Gastrocnemius medialis (tissue), 4 donors: ENCODE measurements at regions of chr14 and their contacts with region 1.

Region 1: GRCh38 chr14:90903101-90903500 is 86.9 kb upstream of the TTC7B start:
- DNase-seq: peak; percentile 23 to 25
- ATAC-seq: peak; percentile 70 to 86
- H3K4me3 ChIP-seq: no peak overlapping the region
- H3K27ac ChIP-seq: no peak overlapping the region
- H3K4me1 ChIP-seq: no peaks in the 10 kb centered on the region
- H3K27me3 ChIP-seq: no peaks in the 10 kb centered on the region
- CTCF ChIP-seq: peak; percentile 44 to 74 (median 62)
- POLR2A ChIP-seq: no peak

Region 2: GRCh38 chr14:90979515-90980239 is 76.6 kb after region 1 on chr14:
- in situ Hi-C with region 1: no loop called
- intact Hi-C with region 1: no loop called
- DNase-seq: no peak
- ATAC-seq: no peak
- H3K4me3 ChIP-seq: no peak overlapping the region
- H3K27ac ChIP-seq: no peak overlapping the region
- H3K4me1 ChIP-seq: peaks cover 0 to 5% of the 10 kb centered on the region in 2 donors
- H3K27me3 ChIP-seq: no peaks in the 10 kb centered on the region
- CTCF ChIP-seq: no peak
- POLR2A ChIP-seq: no peak

Region 3: GRCh38 chr14:91038438-91038837 is 135.3 kb after region 1 on chr14:
- in situ Hi-C with region 1: no loop called
- intact Hi-C with region 1: loop called (anchors 5 kb)
- DNase-seq: peak in 1 of 2 donors; percentile 33
- ATAC-seq: peak; percentile 87 to 91
- H3K4me3 ChIP-seq: no peak overlapping the region
- H3K27ac ChIP-seq: peak overlapping the region in 2 of 4 donors; percentile 8 to 20
- H3K4me1 ChIP-seq: peaks cover 3 to 5% of the 10 kb centered on the region in 2 donors
- H3K27me3 ChIP-seq: no peaks in the 10 kb centered on the region
- CTCF ChIP-seq: no peak
- POLR2A ChIP-seq: no peak

Region 4: DNA sequence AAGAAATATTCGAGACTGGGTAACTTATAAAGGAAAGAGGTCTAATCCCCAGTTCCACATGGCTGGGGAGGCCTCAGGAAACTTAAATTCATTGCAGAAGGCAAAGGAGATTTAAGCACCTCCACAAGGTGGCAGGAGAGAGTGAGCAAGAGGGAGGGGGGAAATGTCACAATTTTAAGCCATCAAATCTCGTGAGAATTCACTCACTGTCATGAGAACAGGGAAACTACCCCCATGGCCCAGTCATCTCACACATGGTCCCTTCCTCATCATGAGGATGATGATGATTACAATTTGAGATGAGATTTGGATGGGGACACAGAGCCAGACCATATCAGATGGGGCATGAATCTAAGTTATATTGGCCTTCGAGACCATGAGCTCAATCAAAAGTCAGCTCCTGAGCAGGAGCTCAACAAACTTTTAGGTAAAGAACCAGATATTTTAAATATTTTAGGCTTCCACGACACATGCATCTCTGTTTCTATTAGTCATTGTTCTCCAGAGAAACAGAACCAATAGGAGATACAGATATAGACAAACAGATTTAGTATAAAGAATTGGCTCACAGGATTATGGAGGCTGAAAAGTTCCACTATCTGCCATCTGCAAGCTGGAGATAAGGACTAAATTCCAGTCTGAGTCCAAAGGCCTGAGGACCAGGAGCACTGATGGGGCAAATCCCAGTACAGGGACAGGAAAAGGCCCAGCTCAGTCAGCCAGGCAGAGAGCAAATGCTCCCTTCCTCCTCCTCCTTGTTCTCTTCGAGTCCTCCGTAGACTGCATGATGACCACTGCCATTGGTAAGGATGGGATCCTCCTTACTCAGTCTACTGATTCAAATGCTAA is 235.6 kb after region 1 on chr14:
- in situ Hi-C with region 1: no loop called
- intact Hi-C with region 1: loop called (anchors 1 kb)
- DNase-seq: peak in 1 of 2 donors; percentile 55
- ATAC-seq: peak; percentile 67 to 81
- H3K4me3 ChIP-seq: no peak overlapping the region
- H3K27ac ChIP-seq: peak overlapping the region; percentile 42 to 63 (median 50)
- H3K4me1 ChIP-seq: peaks cover 15 to 24% of the 10 kb centered on the region in 2 donors
- H3K27me3 ChIP-seq: no peaks in the 10 kb centered on the region
- CTCF ChIP-seq: peak; percentile 37 to 79 (median 65)
- POLR2A ChIP-seq: no peak

Region 5: DNA sequence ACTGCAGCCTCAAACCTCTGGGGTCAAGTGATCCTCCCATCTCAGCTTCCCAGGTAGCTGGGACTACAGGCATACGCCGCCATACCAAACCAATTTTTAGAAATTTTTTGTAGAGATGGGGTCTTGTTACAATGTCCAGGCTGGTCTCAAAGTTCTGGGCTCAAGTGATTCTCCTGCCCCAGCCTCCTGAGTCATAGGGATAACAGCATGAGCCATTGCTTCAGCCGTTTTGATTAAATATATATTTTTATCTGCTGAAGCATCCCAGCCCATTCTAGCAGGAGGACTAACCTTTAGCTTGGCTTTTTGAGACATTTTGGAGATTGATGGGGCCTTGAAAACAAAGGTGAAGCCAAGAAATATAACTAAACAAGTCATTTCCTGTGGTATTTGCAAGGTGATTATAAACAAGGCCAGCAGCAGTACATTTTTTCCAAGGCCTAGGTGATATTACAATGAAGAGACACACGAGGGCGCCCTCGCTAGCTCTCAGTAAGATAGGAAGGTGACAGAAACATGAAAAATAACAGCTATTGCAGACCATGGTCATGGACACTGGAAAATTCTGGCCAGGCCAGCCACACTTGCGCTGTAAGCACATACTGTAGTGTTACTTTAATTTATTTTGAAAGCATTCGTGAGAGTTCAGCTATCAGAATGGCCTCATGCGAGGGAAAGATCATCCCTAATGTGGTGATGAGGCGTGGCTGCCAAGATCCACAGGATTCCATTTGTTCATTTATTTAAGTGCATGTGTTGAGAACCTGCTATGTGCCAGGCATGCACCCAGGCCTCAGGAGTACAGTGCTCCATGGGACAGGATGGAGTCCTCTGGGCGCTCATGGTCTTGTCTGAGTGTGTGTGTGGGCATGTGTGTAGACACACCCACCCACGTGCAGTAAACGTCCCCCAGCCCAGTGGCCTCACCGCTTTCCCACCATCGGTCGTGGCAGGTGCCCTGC is 274.3 kb after region 1 on chr14:
- in situ Hi-C with region 1: loop called (anchors 5 to 10 kb)
- intact Hi-C with region 1: loop called (anchors 1 kb)
- DNase-seq: no peak
- ATAC-seq: no peak
- H3K4me3 ChIP-seq: no peak overlapping the region
- H3K27ac ChIP-seq: peak overlapping the region in 3 of 4 donors; percentile 5 to 40 (median 27)
- H3K4me1 ChIP-seq: peaks cover 4 to 8% of the 10 kb centered on the region in 2 donors
- H3K27me3 ChIP-seq: no peaks in the 10 kb centered on the region
- CTCF ChIP-seq: peak; percentile 23 to 72 (median 60)
- POLR2A ChIP-seq: no peak

Region 6: DNA sequence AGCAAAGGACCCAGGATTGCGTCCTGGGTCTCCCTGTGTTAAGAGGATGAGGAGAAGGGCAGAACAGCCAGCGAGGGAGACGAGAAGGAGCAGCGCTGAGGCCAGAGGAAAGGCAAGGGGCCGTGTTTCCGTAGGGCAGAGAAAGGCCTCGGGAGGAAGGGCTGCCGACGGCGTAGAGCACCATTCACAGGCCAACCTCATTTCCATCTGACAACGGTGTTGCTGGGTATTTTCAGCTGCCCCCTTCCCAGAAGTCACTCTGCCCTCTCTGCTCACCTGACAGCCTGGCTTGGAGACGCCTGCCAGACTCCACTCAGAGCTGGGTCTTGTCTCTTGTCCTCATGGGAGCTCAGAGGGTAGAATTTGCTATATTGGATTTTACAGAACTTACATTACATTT is 290.0 kb after region 1 on chr14:
- in situ Hi-C with region 1: no loop called
- intact Hi-C with region 1: no loop called
- DNase-seq: no peak
- ATAC-seq: no peak
- H3K4me3 ChIP-seq: no peak overlapping the region
- H3K27ac ChIP-seq: no peak overlapping the region
- H3K4me1 ChIP-seq: no peaks in the 10 kb centered on the region
- H3K27me3 ChIP-seq: no peaks in the 10 kb centered on the region
- CTCF ChIP-seq: no peak
- POLR2A ChIP-seq: no peak

Region 7: DNA sequence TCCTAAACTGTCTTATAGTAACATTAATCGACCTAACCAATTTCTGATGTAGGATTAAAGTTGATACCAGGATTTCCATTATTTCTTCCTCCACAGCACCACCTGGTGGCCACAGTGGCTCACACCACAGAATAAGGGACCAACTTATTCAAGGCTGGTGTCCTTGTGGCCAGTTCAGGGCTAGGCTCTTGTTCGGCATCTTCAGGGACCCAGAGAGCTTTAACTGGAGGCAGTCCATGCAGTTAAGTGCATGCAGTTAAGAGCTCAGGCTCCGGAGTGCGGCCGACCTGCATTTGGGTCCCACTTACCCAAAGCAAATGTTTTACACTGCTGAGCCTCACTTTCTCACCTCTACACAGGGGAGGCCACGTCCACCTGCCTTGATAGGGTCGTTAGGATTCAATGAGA is 383.4 kb after region 1 on chr14:
- in situ Hi-C with region 1: loop called in 3 of 4 experiments (anchors 5 to 10 kb)
- intact Hi-C with region 1: loop called (anchors 2 kb)
- DNase-seq: peak in 1 of 2 donors; percentile 53
- ATAC-seq: peak; percentile 62
- H3K4me3 ChIP-seq: no peak overlapping the region
- H3K27ac ChIP-seq: no peak overlapping the region
- H3K4me1 ChIP-seq: no peaks in the 10 kb centered on the region
- H3K27me3 ChIP-seq: no peaks in the 10 kb centered on the region
- CTCF ChIP-seq: peak; percentile 75 to 84 (median 80)
- POLR2A ChIP-seq: no peak